ENCODE measurements at regions of chr16 and their contacts with region 1.

Region 1: GRCh38 chr16:71303938-71304337 is 14.7 kb upstream of the CMTR2 start:
- DNase-seq: peak; percentile 60 to 76
- H3K4me3 ChIP-seq: no peak overlapping the region
- H3K27ac ChIP-seq: peak overlapping the region; percentile 88
- H3K4me1 ChIP-seq: peaks cover 9% of the 10 kb centered on the region
- H3K27me3 ChIP-seq: no peaks in the 10 kb centered on the region
- CTCF ChIP-seq: no peak

Region 2: DNA sequence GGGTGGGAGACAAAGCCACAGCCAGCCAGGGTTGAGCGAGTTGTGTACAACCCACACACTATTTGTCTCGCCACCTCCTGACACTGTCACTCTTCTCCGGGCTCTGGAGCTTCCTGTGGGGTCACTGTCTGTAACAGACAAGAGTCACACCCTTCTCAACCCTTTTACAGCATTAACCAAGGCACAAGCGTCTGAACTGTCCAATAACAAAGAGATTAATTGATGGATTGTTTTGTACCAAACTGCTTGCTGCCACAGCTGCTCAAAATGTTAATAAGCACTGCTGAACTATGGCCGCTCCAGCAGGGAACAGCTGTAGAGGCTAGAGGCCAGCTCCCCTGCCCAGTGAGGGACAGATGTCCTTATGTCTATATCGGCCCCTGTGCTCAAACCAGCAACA is 48.2 kb before region 1 on chr16:
- CTCF ChIA-PET with region 1: no interaction called
- POLR2A ChIA-PET with region 1: interaction called, 17 read pairs
- intact Hi-C with region 1: no loop called
- DNase-seq: no peak
- H3K4me3 ChIP-seq: no peak overlapping the region
- H3K27ac ChIP-seq: no peak overlapping the region
- H3K4me1 ChIP-seq: peaks cover 9% of the 10 kb centered on the region
- H3K27me3 ChIP-seq: no peaks in the 10 kb centered on the region
- CTCF ChIP-seq: no peak

Region 3: DNA sequence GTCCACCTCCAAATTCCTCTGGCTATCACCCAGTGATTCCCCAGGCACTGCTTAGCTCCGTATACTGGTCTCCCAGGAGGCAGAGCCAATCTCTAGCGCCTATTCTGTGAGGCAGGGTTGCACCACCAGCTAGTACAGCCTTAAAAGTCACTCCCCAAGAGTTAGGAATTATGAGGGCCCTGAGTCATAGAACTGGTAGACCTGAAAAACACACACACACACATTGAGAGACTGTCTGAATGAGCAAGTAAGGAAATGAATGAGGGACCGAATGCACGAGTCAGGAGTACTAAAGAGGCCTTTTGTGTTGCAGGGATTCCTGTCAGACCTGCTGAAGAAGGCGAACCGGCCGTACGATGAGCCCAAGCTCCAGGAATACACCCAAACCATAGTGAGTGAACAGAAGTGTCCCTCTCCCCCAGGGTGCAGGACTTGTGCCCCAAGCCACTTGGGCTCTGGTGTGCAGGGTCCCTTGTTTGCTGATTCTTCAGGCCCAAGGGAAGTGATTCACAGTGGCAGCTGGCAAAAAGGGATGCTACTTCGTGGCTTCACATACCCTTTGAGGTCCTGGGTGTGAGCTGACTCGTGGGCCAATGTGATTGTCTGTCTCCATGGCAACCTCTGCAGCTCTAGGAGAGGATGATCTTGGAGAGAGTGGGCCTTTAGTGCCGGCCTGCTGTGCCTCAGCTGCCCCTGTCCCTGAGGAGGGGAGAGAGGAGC is 79.3 kb after region 1 on chr16:
- CTCF ChIA-PET with region 1: no interaction called
- POLR2A ChIA-PET with region 1: no interaction called
- intact Hi-C with region 1: no loop called
- DNase-seq: peak; percentile 25 to 78
- H3K4me3 ChIP-seq: no peak overlapping the region
- H3K27ac ChIP-seq: no peak overlapping the region
- H3K4me1 ChIP-seq: no peaks in the 10 kb centered on the region
- H3K27me3 ChIP-seq: no peaks in the 10 kb centered on the region
- CTCF ChIP-seq: no peak

Region 4: GRCh38 chr16:71440669-71441347 is 136.9 kb after region 1 on chr16:
- CTCF ChIA-PET with region 1: no interaction called
- POLR2A ChIA-PET with region 1: no interaction called
- intact Hi-C with region 1: no loop called
- DNase-seq: no peak
- H3K4me3 ChIP-seq: no peak overlapping the region
- H3K27ac ChIP-seq: no peak overlapping the region
- H3K4me1 ChIP-seq: no peaks in the 10 kb centered on the region
- H3K27me3 ChIP-seq: peaks cover 27% of the 10 kb centered on the region
- CTCF ChIP-seq: peak; percentile 58; the same call in 1 of the 2 replicates

Region 5: DNA sequence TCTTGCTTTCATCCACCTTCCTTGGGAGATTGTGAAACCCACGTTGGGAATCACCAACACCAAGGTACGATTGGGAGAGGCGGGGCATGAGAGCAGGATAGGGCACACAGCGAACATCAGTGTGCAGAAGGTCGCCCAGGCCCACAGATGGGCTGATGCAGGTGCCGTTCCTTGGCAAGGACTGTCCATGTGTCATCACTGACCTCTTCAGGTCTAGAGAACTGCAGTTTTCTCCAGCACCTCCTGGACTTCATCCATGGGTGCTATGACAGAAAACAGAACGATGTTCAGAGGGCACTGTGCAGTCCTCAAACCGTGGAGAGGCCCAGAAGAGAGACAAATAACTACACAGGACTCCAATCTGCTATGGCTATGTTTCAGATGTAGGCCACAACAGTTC is 296.9 kb after region 1 on chr16:
- CTCF ChIA-PET with region 1: no interaction called
- POLR2A ChIA-PET with region 1: no interaction called
- intact Hi-C with region 1: no loop called
- DNase-seq: no peak
- H3K4me3 ChIP-seq: no peak overlapping the region
- H3K27ac ChIP-seq: no peak overlapping the region
- H3K4me1 ChIP-seq: peaks cover 9% of the 10 kb centered on the region; the same call in 1 of the 2 replicates
- H3K27me3 ChIP-seq: no peaks in the 10 kb centered on the region
- CTCF ChIP-seq: no peak

Measured in PC-9 (cell line).